ENCODE measurements at regions of chr5 and their contacts with region 1.

Region 1: GRCh38 chr5:65481635-65482295 is at the start of gene ADAMTS6:
- DNase-seq: peak; percentile 64 to 84 (median 72)
- H3K4me3 ChIP-seq: peak within 1 kb of the TSS; percentile 80
- H3K4me3 Mint-ChIP-seq: no peak within 1 kb of the TSS
- H3K27ac ChIP-seq: peak within 1 kb of the TSS; percentile 56
- H3K27ac Mint-ChIP-seq: peak within 1 kb of the TSS; percentile 73 to 98 (median 93)
- H3K4me1 ChIP-seq: peaks cover 20% of the 10 kb centered on the region
- H3K4me1 Mint-ChIP-seq: peaks cover 6 to 18% (median 9%) of the 10 kb centered on the region in 3 donors
- H3K27me3 ChIP-seq: no peaks in the 10 kb centered on the region
- H3K27me3 Mint-ChIP-seq: peaks cover 0 to 3% of the 10 kb centered on the region in 2 donors
- total RNA-seq, gene ADAMTS6: 0.93 to 1.2 TPM

Region 2: DNA sequence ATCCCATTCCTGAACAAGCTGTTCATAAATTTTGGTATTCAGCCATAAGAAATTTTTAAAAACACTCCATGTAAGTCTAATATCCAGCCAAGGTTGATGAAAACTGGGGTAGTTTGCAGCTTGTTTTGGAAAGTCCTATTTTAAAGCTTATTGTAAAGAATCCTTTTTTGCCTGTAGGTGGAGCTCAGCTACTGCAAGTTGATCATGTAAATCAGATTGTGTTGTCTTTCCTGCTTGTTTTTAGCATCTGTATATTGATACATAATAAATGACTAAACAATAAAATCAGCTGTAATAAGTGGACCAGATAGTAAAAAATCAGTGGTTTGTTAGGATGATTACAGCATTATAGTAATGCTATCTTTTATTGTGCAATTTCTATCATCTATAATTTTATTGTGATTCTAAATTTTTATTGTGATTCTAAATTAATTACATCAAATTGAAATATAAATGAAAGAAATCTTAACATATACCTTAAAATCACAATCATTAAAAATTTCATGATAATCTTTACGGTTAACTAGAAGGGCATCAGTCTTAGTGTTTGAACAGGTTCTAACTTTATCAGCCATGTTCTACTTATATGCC is 670.6 kb before region 1 on chr5:
- CTCF ChIA-PET with region 1: interaction called, 41 read pairs
- POLR2A ChIA-PET with region 1: interaction called, 6 read pairs
- DNase-seq: peak in 2 of 5 donors; percentile 21 to 26
- H3K4me3 ChIP-seq: no peak overlapping the region
- H3K4me3 Mint-ChIP-seq: no peak overlapping the region
- H3K27ac ChIP-seq: no peak overlapping the region
- H3K27ac Mint-ChIP-seq: peak overlapping the region in 1 of 8 donors; percentile 32
- H3K4me1 ChIP-seq: no peaks in the 10 kb centered on the region
- H3K4me1 Mint-ChIP-seq: no peaks in the 10 kb centered on the region
- H3K27me3 ChIP-seq: no peaks in the 10 kb centered on the region
- H3K27me3 Mint-ChIP-seq: no peaks in the 10 kb centered on the region

Region 3: DNA sequence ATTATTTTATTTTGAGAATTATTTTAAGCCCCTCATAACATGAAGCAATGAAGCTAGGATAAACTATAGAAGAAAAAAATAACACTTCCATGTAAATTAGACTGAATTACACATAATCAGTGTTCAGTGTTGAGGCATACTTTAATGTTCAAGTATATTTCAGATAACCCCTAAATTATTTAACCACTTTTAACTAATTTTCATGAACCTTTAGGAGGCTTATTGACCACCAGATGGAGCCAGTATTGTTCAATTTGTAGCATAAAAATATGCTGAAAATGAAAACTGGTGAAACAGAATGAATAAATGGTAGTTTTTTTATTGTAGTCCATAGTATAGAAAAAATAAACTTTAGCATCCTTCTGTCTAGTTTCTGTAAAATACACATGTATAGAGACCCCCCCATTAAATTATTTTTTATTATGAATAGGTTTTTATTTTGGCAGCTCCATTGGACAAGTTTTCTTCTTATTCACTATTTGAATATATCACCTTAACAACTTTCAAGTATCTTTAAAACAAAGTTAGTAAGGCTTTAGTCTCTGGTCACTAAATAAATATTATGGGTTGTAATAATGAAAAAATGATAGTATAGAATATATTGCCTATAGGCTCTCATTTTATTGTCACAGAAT is 522.9 kb before region 1 on chr5:
- CTCF ChIA-PET with region 1: interaction called, 12 read pairs
- POLR2A ChIA-PET with region 1: no interaction called
- DNase-seq: peak in 1 of 5 donors; percentile 17
- H3K4me3 ChIP-seq: no peak overlapping the region
- H3K4me3 Mint-ChIP-seq: no peak overlapping the region
- H3K27ac ChIP-seq: no peak overlapping the region
- H3K27ac Mint-ChIP-seq: peak overlapping the region in 1 of 8 donors; percentile 14
- H3K4me1 ChIP-seq: no peaks in the 10 kb centered on the region
- H3K4me1 Mint-ChIP-seq: no peaks in the 10 kb centered on the region
- H3K27me3 ChIP-seq: no peaks in the 10 kb centered on the region
- H3K27me3 Mint-ChIP-seq: no peaks in the 10 kb centered on the region

Region 4: GRCh38 chr5:65076251-65076869 is 405.4 kb before region 1 on chr5:
- CTCF ChIA-PET with region 1: interaction called, 15 read pairs
- POLR2A ChIA-PET with region 1: no interaction called
- DNase-seq: peak in 4 of 5 donors; percentile 12 to 63 (median 51)
- H3K4me3 ChIP-seq: no peak overlapping the region
- H3K4me3 Mint-ChIP-seq: no peak overlapping the region
- H3K27ac ChIP-seq: no peak overlapping the region
- H3K27ac Mint-ChIP-seq: peak overlapping the region in 3 of 8 donors; percentile 54 to 80 (median 65)
- H3K4me1 ChIP-seq: no peaks in the 10 kb centered on the region
- H3K4me1 Mint-ChIP-seq: peaks cover 4 to 5% (median 5%) of the 10 kb centered on the region in 3 donors
- H3K27me3 ChIP-seq: no peaks in the 10 kb centered on the region
- H3K27me3 Mint-ChIP-seq: peaks cover 6 to 12% of the 10 kb centered on the region in 2 donors

Region 5: DNA sequence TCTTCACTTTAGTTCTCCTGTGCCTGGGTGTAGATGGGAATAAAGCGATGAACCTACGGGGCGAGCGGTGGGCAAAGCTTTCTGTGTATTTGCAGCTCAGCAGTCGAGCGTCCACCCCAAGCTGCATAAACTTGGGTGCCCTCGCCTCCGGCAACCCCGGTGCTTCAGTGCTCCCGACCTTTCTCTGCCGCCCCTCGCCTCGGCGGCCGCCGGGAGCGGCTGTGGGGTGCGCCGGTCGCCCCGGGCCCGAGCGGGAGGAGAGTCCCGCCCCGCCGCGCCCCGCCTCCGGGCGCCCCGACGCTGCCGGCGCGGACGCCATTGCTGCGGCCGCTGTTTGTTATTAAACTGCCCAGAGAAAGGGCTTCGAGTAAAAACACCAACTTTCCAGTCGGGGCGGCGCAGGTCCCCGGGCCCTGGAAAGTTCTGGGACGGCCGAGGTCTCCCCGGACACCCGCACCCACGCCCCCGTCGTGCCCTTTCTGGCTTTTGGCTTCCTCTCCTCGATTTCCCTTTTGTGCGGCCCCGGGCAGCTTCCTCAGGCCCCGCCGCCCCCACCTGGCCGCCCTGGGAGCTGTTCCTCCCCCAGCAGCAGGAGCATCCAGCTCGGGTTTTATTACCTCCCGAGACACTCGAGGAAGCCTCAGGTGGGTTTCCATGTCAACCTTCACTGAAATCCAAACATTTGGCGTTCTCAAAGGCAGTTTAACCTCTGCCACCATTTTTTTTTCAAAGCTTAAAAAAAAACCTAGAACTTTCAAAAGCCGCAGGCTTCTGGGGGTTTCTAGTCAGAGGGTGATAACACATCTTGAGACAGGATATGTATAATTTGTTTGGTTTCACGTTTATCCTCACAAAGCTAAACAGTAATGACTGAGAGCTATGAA is 378.7 kb before region 1 on chr5:
- CTCF ChIA-PET with region 1: interaction called, 38 read pairs
- POLR2A ChIA-PET with region 1: interaction called, 7 read pairs
- DNase-seq: peak; percentile 14 to 79 (median 67)
- H3K4me3 ChIP-seq: peak overlapping the region; percentile 57
- H3K4me3 Mint-ChIP-seq: peak overlapping the region; percentile 84 to 95 (median 86)
- H3K27ac ChIP-seq: peak overlapping the region; percentile 73
- H3K27ac Mint-ChIP-seq: peak overlapping the region; percentile 51 to 97 (median 94)
- H3K4me1 ChIP-seq: peaks cover 22% of the 10 kb centered on the region
- H3K4me1 Mint-ChIP-seq: peaks cover 30 to 33% (median 32%) of the 10 kb centered on the region in 3 donors
- H3K27me3 ChIP-seq: no peaks in the 10 kb centered on the region
- H3K27me3 Mint-ChIP-seq: no peaks in the 10 kb centered on the region

Region 6: GRCh38 chr5:65364907-65365306 is 116.9 kb before region 1 on chr5:
- CTCF ChIA-PET with region 1: no interaction called
- POLR2A ChIA-PET with region 1: no interaction called
- DNase-seq: no peak
- H3K4me3 ChIP-seq: no peak overlapping the region
- H3K4me3 Mint-ChIP-seq: no peak overlapping the region
- H3K27ac ChIP-seq: no peak overlapping the region
- H3K27ac Mint-ChIP-seq: no peak overlapping the region
- H3K4me1 ChIP-seq: no peaks in the 10 kb centered on the region
- H3K4me1 Mint-ChIP-seq: no peaks in the 10 kb centered on the region
- H3K27me3 ChIP-seq: no peaks in the 10 kb centered on the region
- H3K27me3 Mint-ChIP-seq: no peaks in the 10 kb centered on the region

Region 7: DNA sequence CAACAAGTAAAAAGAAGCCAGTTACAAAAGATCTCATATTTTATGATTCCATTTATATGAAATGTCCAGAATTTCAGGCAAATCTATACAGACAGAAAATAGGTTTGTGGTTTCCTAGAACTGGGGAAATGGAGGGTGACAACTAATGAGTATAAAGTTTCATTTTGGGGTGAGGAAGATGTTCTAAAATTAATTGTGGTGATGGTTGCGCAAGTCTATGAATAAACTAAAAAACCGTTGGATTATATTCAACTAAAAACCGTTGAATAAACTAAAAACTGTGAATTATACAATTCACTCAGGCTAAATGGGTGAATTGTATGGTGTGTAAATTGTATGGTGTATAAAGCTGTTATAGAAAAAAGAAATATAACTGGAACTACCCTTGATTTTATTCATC is 47.6 kb before region 1 on chr5:
- CTCF ChIA-PET with region 1: no interaction called
- POLR2A ChIA-PET with region 1: no interaction called
- DNase-seq: no peak
- H3K4me3 ChIP-seq: no peak overlapping the region
- H3K4me3 Mint-ChIP-seq: no peak overlapping the region
- H3K27ac ChIP-seq: no peak overlapping the region
- H3K27ac Mint-ChIP-seq: no peak overlapping the region
- H3K4me1 ChIP-seq: no peaks in the 10 kb centered on the region
- H3K4me1 Mint-ChIP-seq: no peaks in the 10 kb centered on the region
- H3K27me3 ChIP-seq: no peaks in the 10 kb centered on the region
- H3K27me3 Mint-ChIP-seq: peaks cover 0 to 1% of the 10 kb centered on the region in 2 donors

Measured in CD8-positive, alpha-beta memory T cell (primary cell).